ENCODE measurements at regions of chr16 and their contacts with region 1.

Region 1: GRCh38 chr16:10737068-10737625 is 6.5 kb upstream of the NUBP1 start:
- DNase-seq: no peak
- ATAC-seq: peak; percentile 77

Region 2: DNA sequence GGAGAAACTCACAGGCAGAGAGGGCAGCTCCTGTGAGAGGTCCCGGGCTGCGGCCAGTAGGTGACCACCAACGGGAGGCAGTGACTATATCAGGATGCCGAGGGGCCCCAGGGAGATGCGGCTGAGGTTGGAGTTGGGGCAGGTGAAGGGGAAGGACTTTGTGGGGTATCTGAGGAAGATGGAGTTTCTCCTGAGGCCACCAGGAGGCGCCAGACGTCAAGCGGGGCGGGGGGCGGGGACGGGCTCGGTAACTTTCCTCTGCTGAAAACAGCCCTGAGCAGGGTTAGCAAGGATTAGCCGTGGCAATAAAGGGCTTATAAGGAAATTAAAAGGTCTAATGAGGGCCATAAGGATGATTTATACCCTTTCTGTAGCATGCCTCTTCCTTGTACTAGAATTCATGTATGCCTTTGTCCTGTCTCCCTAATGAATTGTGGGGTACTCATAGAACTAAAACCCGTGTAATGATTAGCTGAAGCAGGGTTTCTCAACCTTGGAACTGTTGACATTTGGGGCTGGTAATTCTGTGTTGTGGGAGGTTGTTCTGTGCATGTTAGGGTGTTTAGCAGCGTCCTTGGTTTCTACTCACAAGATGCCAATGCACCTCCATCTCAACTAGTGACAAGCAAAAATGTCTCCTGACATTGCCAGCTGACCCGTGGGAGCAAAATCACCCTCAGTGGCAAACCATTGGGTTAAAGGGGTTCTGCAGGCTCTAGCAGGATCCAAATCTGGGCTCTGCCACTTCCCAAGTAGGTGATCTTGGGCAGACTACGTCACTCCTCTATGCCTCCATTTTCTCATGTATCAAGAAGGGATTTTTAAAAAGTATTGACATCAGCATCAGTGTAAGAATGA is 480.1 kb before region 1 on chr16:
- intact Hi-C with region 1: loop called (anchors 5 kb)
- DNase-seq: peak; percentile 42
- ATAC-seq: peak; percentile 68

Measured in Right ventricle myocardium superior (tissue), 1 donor.